Activated CD8-positive, alpha-beta memory T cell treated with anti-CD3 and anti-CD28 coated beads, Interleukin-2, amount 10 ng/mL, durations not matched to agents 7 days and 5 days (primary cell): ENCODE measurements at regions of chr17 and their contacts with region 1.

Region 1: GRCh38 chr17:50200457-50201275 is 765 bp downstream of the COL1A1 start:
- DNase-seq: peak; percentile 89
- ATAC-seq: peak; percentile 85
- H3K4me3 Mint-ChIP-seq: peak overlapping the region; percentile 61
- H3K27ac Mint-ChIP-seq: no peak overlapping the region
- H3K4me1 Mint-ChIP-seq: peaks cover 13% of the 10 kb centered on the region
- H3K27me3 Mint-ChIP-seq: peaks cover 58% of the 10 kb centered on the region

Region 2: GRCh38 chr17:50064258-50065001 is 136.2 kb before region 1 on chr17:
- CTCF ChIA-PET with region 1: no interaction called
- DNase-seq: no peak
- ATAC-seq: no peak
- H3K4me3 Mint-ChIP-seq: no peak overlapping the region
- H3K27ac Mint-ChIP-seq: no peak overlapping the region
- H3K4me1 Mint-ChIP-seq: no peaks in the 10 kb centered on the region
- H3K27me3 Mint-ChIP-seq: no peaks in the 10 kb centered on the region

Region 3: DNA sequence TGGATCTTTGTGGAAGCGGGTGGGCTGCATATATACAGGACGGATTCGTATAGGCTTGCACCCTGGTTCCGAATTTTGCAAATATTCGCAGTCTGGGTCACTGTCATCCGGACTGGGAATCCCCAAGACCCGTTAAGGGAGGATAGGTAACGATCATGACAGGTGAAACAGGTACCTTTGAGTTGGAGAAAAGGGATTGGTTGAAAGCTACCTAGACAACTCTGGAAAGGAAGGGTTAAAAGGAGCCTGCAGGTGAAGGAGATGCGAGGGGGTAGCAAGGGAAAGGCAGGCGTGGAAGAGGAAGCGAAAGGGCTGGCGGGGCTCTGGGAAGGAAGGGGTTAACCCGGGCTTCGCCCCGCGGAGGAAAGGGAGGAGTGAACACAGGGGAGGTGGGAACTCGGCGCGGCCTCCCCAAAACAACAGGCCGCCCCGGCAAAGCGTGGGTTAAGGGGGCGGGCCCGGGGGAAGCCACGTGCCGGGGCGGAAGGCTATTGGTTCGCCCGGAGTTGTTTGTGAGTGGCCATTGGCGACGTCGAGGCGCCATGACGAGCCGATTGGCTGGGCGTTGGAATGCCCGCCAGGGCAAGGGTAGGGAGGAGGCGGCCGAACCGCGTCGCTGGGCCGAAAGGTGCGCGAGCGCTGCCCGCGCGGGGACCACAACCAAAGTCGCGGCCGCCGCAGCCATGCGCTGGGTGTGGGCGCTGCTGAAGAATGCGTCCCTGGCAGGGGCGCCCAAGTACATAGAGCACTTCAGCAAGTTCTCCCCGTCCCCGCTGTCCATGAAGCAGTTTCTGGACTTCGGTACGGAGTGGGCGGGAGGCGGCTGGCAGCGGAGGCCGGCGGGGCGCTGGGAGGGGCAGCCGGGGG is 105.7 kb before region 1 on chr17 and contains the start of gene PDK2:
- CTCF ChIA-PET with region 1: interaction called, 18 read pairs
- DNase-seq: peak; percentile 98
- ATAC-seq: peak; percentile 96
- H3K4me3 Mint-ChIP-seq: peak within 1 kb of the TSS; percentile 96
- H3K27ac Mint-ChIP-seq: peak within 1 kb of the TSS; percentile 91
- H3K4me1 Mint-ChIP-seq: peaks cover 24% of the 10 kb centered on the region
- H3K27me3 Mint-ChIP-seq: no peaks in the 10 kb centered on the region
- total RNA-seq, gene PDK2: 13.6 to 20.9 TPM

Region 4: GRCh38 chr17:50169121-50169764 is 31.4 kb before region 1 on chr17:
- CTCF ChIA-PET with region 1: interaction called, 82 read pairs
- DNase-seq: peak; percentile 75
- ATAC-seq: peak; percentile 74
- H3K4me3 Mint-ChIP-seq: peak overlapping the region; percentile 11
- H3K27ac Mint-ChIP-seq: peak overlapping the region; percentile 47
- H3K4me1 Mint-ChIP-seq: peaks cover 22% of the 10 kb centered on the region
- H3K27me3 Mint-ChIP-seq: no peaks in the 10 kb centered on the region

Region 5: DNA sequence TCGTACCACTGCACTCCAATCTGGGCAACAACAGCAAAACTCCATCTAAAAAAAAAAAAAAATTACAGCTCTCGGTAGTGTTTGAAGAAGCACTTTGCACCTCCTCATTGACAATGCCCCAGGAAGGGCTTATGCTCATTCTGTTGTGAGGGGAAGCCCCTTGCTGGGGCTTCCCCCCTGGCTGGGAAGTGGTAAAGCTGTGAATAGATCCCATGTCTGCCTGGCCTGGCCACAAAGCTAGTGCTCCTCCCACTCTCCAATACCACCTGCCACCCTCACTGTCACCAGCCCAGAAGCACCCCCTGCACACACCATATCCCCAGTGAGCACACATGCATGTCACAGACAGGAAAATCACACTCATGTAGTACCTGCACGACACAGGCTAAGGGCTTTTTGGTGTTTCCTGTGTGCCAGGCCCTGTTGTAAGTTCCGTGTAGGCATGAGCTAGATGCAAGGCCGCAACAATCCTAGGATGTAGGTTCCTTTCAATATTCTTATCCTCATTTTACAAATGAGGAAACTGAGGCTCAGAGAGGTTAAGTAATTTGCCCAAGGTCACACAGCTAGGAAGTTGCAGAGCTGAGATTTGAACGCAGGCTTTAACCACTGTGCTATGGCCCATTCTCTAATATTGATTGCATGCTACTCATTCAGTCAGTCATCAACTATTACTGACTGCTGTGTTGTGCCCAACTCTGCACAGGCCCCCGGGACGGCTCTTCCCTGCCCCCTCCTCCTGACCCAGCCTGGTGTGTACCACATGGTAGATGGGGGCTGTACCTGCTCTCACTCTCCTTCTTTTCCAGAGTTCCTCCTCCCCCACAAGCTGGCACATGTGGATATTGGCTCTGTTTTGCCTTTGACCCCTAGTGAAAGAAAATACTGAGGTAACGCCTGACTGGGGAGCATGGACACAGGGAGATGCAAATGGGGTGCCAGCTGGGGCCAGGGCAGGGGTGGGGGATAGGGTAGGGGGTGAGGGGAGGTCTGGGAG is 12.7 kb after region 1 on chr17:
- CTCF ChIA-PET with region 1: interaction called, 64 read pairs
- DNase-seq: peak; percentile 73
- ATAC-seq: peak; percentile 88
- H3K4me3 Mint-ChIP-seq: no peak overlapping the region
- H3K27ac Mint-ChIP-seq: no peak overlapping the region
- H3K4me1 Mint-ChIP-seq: peaks cover 12% of the 10 kb centered on the region
- H3K27me3 Mint-ChIP-seq: peaks cover 63% of the 10 kb centered on the region

Region 6: DNA sequence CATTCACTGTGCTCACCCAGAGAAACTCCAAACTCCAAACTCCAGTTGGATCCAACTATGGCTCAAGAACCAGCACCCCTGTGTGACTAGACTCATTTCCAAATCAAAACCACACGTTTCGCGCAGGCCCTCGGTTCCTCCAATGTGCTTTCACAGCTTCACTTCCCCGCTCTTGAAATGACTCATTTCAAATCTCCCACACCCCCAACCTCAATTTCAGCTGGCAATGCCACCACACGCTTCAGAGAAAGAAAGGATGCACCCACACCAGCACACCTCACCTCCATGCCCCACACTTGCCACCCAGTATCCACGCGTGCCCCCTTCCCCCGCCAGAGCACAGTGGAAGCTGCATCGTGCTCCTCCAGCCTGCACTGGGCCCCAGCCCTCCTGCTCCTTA is 82.6 kb after region 1 on chr17:
- CTCF ChIA-PET with region 1: interaction called, 244 read pairs
- DNase-seq: peak; percentile 74
- ATAC-seq: peak; percentile 66
- H3K4me3 Mint-ChIP-seq: no peak overlapping the region
- H3K27ac Mint-ChIP-seq: no peak overlapping the region
- H3K4me1 Mint-ChIP-seq: peaks cover 26% of the 10 kb centered on the region
- H3K27me3 Mint-ChIP-seq: peaks cover 23% of the 10 kb centered on the region

Region 7: DNA sequence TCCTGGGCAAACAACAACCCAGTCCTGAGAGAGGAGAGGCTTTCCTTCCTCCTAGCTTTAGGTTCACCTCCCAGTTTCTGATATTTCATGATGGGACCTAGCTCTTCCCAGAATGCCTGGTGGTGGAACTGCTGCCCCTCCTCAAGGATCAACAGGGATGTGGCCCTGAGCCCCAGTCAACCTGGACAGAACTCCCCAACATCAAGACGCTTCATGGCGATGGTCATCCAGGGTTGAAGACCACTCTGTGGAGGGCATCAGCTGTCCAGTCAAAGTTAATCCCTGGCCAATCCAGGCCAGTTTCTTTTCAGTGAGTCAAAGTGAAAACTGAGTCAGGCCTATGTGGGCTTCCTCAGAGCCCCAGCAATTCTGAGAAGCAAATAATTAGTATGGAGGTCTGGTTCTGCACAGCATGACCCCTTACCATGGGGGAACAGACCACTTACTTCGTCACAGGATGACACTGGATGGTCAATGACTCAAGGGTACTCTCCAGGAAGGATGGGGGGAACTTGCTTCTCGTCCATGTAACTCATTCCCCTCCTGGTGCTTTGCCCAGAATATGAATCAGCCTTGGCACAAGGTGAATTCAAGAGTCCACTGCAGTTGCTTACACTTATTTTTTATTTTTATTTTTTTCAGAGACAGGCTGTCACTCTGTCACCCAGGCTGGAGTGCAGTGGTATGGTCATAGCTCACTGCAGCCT is 130.6 kb after region 1 on chr17:
- CTCF ChIA-PET with region 1: interaction called, 18 read pairs
- DNase-seq: no peak
- ATAC-seq: peak; percentile 45
- H3K4me3 Mint-ChIP-seq: no peak overlapping the region
- H3K27ac Mint-ChIP-seq: no peak overlapping the region
- H3K4me1 Mint-ChIP-seq: peaks cover 31% of the 10 kb centered on the region
- H3K27me3 Mint-ChIP-seq: no peaks in the 10 kb centered on the region